AG04450 (cell line): ENCODE measurements at regions of chr12 and their contacts with region 1.

Region 1: DNA sequence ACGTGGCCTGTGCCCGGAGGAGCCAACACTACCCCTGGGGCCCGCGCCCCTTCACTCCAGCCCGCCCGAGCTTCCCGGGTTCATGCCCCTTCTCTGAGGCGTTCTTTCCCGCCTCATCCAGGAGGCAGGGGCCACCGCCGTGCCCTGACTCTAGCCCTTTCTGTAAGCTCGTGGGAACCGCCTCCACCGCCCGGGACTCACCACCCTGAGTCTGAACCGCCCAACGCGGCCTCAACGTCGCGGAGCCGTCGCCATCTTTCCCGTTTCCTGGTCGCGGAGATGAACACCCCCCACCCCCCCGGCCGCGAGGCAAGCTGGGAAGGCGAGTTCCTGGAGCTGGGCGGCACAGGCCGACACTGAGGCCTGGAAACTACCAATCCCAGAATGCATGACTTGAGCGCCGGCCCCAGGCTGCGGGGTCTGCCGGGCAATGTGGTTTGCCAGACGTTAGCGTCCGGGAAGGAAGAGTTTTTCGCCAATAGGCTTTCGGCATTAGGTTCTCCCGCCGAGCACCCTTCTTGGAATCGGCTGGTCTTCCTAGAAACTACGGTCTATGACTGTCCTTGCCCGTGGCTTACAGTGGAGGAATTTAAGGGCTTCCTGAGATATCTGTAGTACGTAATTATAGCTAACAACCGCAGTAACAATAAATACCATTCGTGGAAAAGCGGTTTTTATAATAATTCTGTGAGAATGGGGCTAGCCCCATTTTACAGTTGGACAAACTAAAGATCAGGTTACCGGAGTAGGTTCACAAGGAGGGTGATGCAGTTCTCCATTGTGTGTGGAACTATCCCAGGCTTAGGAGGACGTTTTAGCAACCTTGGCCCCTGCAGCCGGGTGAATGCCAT is at the start of gene DDX23:
- DNase-seq: peak; percentile 94
- H3K4me3 ChIP-seq: peak within 1 kb of the TSS; percentile 90
- H3K27ac ChIP-seq: peak within 1 kb of the TSS; percentile 47
- H3K27me3 ChIP-seq: peaks cover 4% of the 10 kb centered on the region
- CTCF ChIP-seq: no peak
- polyA plus RNA-seq, gene DDX23: 56.6 and 57.4 TPM in 2 replicates

Region 2: GRCh38 chr12:48758221-48758620 is 93.9 kb before region 1 on chr12:
- CTCF ChIA-PET with region 1: interaction called, 10 read pairs
- POLR2A ChIA-PET with region 1: interaction called, 5 read pairs
- DNase-seq: no peak
- H3K4me3 ChIP-seq: no peak overlapping the region
- H3K27ac ChIP-seq: no peak overlapping the region
- H3K27me3 ChIP-seq: no peaks in the 10 kb centered on the region
- CTCF ChIP-seq: no peak

Region 3: DNA sequence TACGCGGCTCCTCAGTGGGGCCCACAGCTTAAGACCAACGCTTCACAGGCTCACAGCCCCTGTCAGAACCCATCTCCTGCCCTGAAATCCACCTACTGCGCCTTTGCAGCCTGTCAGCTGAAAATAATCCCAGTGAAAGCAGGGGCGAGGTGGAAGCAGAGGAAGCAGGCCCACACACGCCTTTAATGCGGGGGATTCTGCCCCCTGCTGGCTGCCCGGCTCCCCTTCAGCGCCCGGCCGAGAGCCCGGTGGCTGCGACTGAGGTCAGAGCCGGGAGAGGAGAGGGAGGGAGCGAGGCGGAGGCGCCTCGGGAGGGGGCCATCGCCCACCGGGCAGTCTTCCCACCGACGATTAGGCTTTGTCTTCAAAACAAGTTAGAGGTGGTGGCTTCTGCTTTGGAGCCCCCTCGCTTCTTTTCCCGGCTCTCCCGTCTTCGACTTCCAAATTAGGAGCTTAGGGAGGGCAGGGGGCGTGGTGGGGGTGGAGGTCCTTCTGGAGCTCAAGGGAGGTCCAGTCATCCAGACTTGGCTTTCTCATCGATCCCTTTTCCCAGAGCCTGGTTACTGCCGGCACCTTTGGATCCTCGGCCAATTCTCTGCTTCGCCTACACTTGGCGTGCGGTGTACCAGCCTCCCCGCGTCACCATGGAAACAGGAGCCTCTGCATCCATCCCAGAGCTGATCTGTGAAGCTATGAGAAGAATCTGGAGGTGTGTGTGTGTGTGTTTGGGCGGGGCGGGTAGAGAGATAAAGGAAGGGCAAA is 38.7 kb after region 1 on chr12:
- CTCF ChIA-PET with region 1: interaction called, 411 read pairs
- POLR2A ChIA-PET with region 1: interaction called, 3 read pairs
- DNase-seq: peak; percentile 27
- H3K4me3 ChIP-seq: peak overlapping the region; percentile 47
- H3K27ac ChIP-seq: no peak overlapping the region
- H3K27me3 ChIP-seq: peaks cover 9% of the 10 kb centered on the region
- CTCF ChIP-seq: peak; percentile 94

Region 4: DNA sequence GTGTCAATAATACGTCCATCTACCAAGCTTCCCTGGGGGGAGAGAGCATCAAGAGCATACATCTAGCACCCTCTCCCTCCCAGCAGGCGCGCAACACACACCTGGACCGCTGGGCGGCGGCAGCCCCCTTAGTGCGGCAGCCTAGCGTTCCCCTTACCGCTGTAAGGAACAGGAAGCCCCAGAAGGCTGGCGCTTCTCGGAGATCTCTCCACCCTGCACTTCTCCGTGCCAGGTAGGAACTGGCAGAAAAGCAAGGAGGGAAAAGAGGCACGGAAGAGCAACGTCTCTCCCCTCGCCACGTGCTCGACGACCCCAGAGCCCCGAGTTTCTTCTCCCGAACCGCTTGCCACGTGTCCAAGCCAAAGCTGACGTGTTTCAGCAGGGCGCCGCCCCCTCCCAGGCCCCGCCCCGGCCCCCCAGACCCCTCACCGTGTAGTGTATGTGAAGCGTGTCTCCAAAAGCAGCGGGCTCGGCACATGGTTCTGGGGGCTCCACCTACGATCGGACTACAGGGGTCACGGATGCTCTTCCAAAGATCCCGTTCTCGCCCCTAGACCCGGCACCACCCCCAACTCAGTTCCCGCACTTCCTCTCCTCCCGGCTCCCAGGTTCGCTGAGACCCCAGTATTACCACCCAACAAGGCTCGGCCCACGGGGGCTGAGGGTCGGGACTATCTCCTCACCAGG is 72.7 kb after region 1 on chr12:
- CTCF ChIA-PET with region 1: interaction called, 140 read pairs
- POLR2A ChIA-PET with region 1: interaction called, 4 read pairs
- DNase-seq: no peak
- H3K4me3 ChIP-seq: peak overlapping the region; percentile 81
- H3K27ac ChIP-seq: peak overlapping the region; percentile 11
- H3K27me3 ChIP-seq: no peaks in the 10 kb centered on the region
- CTCF ChIP-seq: peak; percentile 65

Region 5: GRCh38 chr12:48957141-48958048 is 105.3 kb after region 1 on chr12 and contains the start of gene ARF3:
- CTCF ChIA-PET with region 1: interaction called, 12 read pairs
- POLR2A ChIA-PET with region 1: interaction called, 3 read pairs
- DNase-seq: peak; percentile 76
- H3K4me3 ChIP-seq: peak within 1 kb of the TSS; percentile 97
- H3K27ac ChIP-seq: peak within 1 kb of the TSS; percentile 80
- H3K27me3 ChIP-seq: peaks cover 5% of the 10 kb centered on the region
- CTCF ChIP-seq: no peak
- polyA plus RNA-seq, gene ARF3: 260 TPM in 2 replicates

Region 6: DNA sequence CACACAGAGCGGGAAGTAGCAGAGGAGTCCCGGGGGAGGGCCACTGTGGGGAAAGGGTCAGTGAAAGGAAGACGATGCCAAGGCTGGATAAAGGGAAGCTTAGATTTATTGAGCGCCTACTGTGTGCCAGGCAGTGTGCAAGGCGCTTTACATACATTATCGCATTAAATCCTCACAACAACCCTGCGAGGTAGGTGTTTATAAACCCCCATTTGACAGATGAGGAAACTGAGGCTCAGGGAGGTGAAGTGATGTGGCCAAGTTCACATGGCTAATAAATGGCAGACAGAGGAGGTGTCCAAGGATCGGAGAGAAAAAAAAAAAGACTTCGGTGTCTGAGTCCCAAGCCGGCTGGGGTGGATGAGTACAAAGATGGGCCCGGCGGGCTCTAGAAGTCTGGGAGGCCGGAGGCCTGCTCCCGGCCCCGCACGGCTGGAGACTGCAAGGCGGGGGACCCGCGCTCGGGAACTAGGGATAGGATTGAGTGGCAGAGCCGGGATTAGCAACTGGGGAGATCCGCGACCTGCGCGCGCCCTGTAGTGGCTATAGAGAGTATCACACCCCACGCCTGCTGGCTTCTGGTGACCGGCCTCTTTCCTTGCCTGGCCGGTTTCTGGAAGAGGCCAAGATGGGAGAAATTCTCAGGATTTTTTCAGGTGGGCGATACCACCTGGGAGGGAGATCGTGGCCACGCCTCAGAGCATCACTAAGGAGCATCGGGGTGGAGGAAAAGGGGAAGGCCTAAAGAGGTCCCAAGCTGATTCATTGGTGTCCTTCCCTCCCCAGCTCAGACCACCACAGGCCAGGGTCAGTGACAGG is 143.2 kb after region 1 on chr12:
- CTCF ChIA-PET with region 1: interaction called, 44 read pairs
- POLR2A ChIA-PET with region 1: interaction called, 4 read pairs
- DNase-seq: peak; percentile 49
- H3K4me3 ChIP-seq: peak overlapping the region; percentile 22; the same call in 1 of the 2 replicates
- H3K27ac ChIP-seq: no peak overlapping the region
- H3K27me3 ChIP-seq: peaks cover 31% of the 10 kb centered on the region
- CTCF ChIP-seq: peak; percentile 80